Gastrocnemius medialis (tissue), 4 donors: ENCODE measurements at regions of chr15 and their contacts with region 1.

Region 1: DNA sequence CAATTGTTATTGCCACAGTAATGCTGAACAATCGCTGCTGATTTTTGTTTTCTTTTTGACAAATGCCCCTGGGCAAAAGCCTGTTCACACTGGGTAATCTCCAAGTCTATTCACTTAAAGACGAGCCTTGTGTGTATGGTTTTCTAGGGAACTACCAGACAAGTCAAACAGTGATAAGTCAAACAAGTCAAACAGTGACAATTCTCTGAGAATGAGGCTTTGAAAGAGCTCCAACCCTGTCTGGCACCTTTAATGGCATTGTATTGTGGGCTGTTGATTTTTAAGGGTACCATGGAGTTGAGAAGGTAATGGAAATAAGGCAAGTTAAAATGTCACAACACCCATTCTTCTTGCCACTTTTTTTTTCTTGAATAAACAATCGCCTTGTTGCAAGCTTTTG is 59.4 kb upstream of the TMC3 start:
- DNase-seq: no peak
- ATAC-seq: no peak
- H3K4me3 ChIP-seq: no peak overlapping the region
- H3K27ac ChIP-seq: no peak overlapping the region
- H3K4me1 ChIP-seq: no peaks in the 10 kb centered on the region
- H3K27me3 ChIP-seq: no peaks in the 10 kb centered on the region
- CTCF ChIP-seq: no peak
- POLR2A ChIP-seq: no peak

Region 2: DNA sequence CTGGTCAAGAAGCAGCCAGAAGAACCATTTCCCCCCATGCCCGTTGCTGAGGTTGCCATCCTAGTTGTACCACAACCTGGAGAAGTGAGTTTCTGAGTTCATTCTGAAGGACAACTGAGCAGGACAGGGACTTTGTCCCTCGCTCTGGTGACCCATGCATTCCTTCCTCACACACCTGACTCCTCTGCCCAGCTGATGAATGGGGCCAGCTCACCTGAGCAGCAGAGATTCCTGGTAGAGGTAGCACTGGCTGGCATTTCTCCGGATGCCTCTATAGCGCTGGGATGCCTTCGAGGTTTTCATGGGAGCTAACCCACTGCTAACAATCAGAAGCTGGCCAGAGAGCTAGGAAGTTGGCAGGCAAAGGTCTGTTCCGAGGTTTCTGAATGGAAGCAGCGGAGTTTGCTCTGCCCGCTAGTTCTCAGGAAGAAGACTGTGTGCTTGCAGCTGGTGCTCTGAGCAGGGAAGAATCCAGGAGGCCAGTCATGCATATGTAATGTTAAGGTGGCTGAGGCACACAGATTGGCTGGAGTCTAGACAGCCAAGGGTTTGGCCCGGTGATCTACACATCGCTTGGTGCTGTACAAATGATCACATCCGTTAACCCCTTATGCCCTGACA is 59.6 kb before region 1 on chr15 and contains the start of gene TMC3:
- in situ Hi-C with region 1: loop called in 1 of 4 experiments (anchors 10 kb)
- intact Hi-C with region 1: no loop called
- DNase-seq: no peak
- ATAC-seq: no peak
- H3K4me3 ChIP-seq: no peak within 1 kb of the TSS
- H3K27ac ChIP-seq: no peak within 1 kb of the TSS
- H3K4me1 ChIP-seq: no peaks in the 10 kb centered on the region
- H3K27me3 ChIP-seq: no peaks in the 10 kb centered on the region
- CTCF ChIP-seq: no peak
- POLR2A ChIP-seq: no peak
- total RNA-seq, gene TMC3: not detected

Region 3: GRCh38 chr15:81400640-81401236 is 32.7 kb before region 1 on chr15:
- in situ Hi-C with region 1: no loop called
- intact Hi-C with region 1: no loop called
- DNase-seq: no peak
- ATAC-seq: no peak
- H3K4me3 ChIP-seq: no peak overlapping the region
- H3K27ac ChIP-seq: no peak overlapping the region
- H3K4me1 ChIP-seq: no peaks in the 10 kb centered on the region
- H3K27me3 ChIP-seq: no peaks in the 10 kb centered on the region
- CTCF ChIP-seq: peak; percentile 31 to 62 (median 44)
- POLR2A ChIP-seq: no peak

Region 4: DNA sequence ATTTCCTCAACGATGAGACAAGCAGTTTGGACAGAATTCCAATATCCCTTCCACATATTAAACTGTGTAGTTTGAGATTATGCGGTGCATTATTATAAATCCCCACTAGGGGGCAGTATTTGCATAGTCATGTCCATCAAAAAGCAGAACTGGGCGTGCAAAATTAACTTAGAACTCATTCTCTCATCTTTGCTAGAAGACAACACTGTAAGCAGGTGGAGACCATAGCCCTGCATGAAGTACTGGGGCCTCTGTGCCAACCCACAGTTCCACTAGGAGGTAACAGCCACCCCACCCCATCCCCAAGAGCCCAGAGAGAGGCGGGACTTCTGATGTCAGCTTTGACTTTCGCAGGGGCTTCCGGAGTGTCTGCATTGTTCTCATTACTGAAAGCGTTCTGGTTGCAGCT is 47.2 kb after region 1 on chr15:
- in situ Hi-C with region 1: no loop called
- intact Hi-C with region 1: no loop called
- DNase-seq: no peak
- ATAC-seq: peak; percentile 52 to 75
- H3K4me3 ChIP-seq: no peak overlapping the region
- H3K27ac ChIP-seq: no peak overlapping the region
- H3K4me1 ChIP-seq: no peaks in the 10 kb centered on the region
- H3K27me3 ChIP-seq: no peaks in the 10 kb centered on the region
- CTCF ChIP-seq: peak; percentile 69 to 85 (median 82)
- POLR2A ChIP-seq: no peak

Region 5: DNA sequence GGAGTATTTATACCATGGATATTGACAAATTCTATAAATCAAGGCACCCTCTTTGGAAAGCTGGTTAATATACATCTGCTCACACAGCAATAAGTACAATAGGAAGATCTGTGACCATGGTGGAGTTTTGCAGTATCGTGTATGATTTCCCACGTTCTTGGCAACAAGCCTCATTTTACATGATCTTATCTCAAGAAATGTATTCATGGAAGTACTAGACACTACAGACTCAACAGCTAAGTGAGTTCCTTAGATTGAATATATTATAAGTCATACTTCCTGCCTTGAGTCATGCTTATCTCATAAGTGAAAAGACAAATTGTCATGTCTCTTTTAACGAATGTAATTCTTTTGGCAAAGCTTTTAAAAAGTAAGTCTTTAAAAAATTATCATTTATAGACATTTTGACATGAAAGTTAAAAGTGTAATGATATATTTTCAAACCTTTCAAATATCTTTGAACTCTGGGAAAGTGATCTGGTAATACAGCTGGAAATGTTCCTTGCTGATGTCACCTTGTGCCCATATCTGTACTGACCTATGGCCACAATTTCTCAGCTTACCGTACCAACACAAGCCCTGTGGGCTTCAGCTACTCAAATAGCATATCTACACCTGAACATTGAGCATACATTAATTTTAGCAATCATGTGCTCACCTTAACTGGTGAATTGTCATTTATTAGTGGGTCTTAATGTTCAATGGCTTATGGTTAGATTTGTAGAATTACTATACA is 70.9 kb after region 1 on chr15:
- in situ Hi-C with region 1: no loop called
- intact Hi-C with region 1: no loop called
- DNase-seq: no peak
- ATAC-seq: no peak
- H3K4me3 ChIP-seq: no peak overlapping the region
- H3K27ac ChIP-seq: no peak overlapping the region
- H3K4me1 ChIP-seq: no peaks in the 10 kb centered on the region
- H3K27me3 ChIP-seq: no peaks in the 10 kb centered on the region
- CTCF ChIP-seq: no peak
- POLR2A ChIP-seq: no peak